Posterior cingulate gyrus (tissue), 11 donors: ENCODE measurements at regions of chr1 and their contacts with region 1.

Region 1: GRCh38 chr1:28494737-28495136 is 11.1 kb upstream of the RCC1 start:
- DNase-seq: no peak

Region 2: GRCh38 chr1:28449904-28450303 is 44.8 kb before region 1 on chr1:
- intact Hi-C with region 1: loop called (anchors 2 kb)
- DNase-seq: no peak